ENCODE measurements at regions of chr3 and their contacts with region 1.

Region 1: DNA sequence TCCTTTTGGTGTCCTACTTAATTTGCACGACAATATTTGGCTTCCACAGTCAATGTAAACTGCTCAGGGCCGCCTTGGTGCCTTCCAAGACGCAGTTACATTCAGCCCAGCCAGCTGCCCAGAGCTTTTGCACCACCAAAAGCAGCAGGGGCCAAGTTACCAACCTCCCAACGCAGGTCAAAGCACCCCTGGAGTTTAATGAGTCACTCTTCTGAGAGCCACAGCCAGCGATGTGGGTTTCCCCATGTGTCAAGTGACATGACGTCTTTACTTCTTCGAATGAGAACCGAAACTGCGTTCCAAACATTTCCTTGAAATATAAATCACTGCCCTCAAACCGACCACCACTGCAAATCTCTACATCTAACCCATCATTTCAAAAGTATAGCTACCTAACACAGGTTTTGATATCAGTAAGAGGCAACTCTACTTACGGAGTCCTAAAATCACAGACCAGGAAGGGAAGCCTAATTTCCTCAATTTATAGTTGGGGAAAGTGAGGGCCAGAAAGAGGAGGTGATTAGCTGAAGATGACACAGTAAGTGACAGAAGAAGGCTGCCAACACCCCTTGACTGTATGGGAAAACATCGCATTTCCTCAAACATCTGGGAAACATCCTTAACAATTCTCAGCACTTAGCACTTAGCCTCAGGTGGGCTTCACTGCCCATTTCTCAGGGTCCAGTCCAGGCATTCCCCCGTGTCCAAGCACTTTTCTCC is 24.5 kb downstream of the MB21D2 start:
- DNase-seq: peak; percentile 86
- H3K4me3 Mint-ChIP-seq: peak overlapping the region; percentile 24
- H3K27ac Mint-ChIP-seq: peak overlapping the region; percentile 80
- H3K4me1 Mint-ChIP-seq: peaks cover 82% of the 10 kb centered on the region
- H3K27me3 Mint-ChIP-seq: peaks cover 12% of the 10 kb centered on the region

Region 2: GRCh38 chr3:192675958-192676649 is 217.0 kb before region 1 on chr3:
- CTCF ChIA-PET with region 1: no interaction called
- POLR2A ChIA-PET with region 1: no interaction called
- intact Hi-C with region 1: loop called (anchors 2 kb)
- DNase-seq: peak; percentile 26
- H3K4me3 Mint-ChIP-seq: no peak overlapping the region
- H3K27ac Mint-ChIP-seq: peak overlapping the region; percentile 90
- H3K4me1 Mint-ChIP-seq: peaks cover 9% of the 10 kb centered on the region
- H3K27me3 Mint-ChIP-seq: peaks cover 3% of the 10 kb centered on the region

Region 3: GRCh38 chr3:192831111-192831644 is 62.0 kb before region 1 on chr3:
- CTCF ChIA-PET with region 1: no interaction called
- POLR2A ChIA-PET with region 1: interaction called, 5 read pairs
- intact Hi-C with region 1: loop called (anchors 1 kb)
- DNase-seq: peak; percentile 64
- H3K4me3 Mint-ChIP-seq: no peak overlapping the region
- H3K27ac Mint-ChIP-seq: peak overlapping the region; percentile 24
- H3K4me1 Mint-ChIP-seq: peaks cover 39% of the 10 kb centered on the region
- H3K27me3 Mint-ChIP-seq: peaks cover 1% of the 10 kb centered on the region

Region 4: DNA sequence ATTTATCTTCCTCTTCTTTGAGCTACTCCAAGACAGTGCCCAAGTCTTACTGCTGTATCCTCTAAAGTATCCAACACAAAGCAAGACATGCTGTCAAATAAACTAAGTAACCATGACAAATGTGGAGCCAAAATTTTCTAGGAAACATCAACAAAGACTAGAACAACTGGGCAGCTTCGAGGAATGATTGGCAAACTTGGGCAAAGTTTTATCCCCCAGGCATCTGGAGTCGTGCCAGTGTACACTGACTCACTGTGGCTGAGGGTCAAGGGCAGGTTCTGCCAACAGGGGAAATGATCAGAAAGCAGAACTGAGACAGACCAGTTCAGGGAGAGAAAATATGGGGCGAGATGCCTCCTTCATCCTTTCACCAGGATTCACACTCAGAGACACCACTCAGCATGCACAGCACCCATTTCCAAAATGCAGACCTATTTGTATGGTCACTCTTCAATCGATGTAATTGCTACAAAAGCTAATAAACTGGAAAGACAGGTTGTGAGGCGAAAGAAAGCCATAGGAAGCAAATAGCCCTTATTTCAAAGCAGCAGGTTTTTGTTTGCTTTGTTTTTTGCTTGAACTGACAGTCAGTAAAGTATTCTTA is 41.2 kb before region 1 on chr3:
- CTCF ChIA-PET with region 1: no interaction called
- POLR2A ChIA-PET with region 1: interaction called, 4 read pairs
- intact Hi-C with region 1: loop called (anchors 1 kb)
- DNase-seq: no peak
- H3K4me3 Mint-ChIP-seq: no peak overlapping the region
- H3K27ac Mint-ChIP-seq: no peak overlapping the region
- H3K4me1 Mint-ChIP-seq: peaks cover 57% of the 10 kb centered on the region
- H3K27me3 Mint-ChIP-seq: no peaks in the 10 kb centered on the region

Region 5: GRCh38 chr3:192929755-192930547 is 36.8 kb after region 1 on chr3:
- CTCF ChIA-PET with region 1: no interaction called
- POLR2A ChIA-PET with region 1: no interaction called
- intact Hi-C with region 1: no loop called
- DNase-seq: no peak
- H3K4me3 Mint-ChIP-seq: no peak overlapping the region
- H3K27ac Mint-ChIP-seq: no peak overlapping the region
- H3K4me1 Mint-ChIP-seq: peaks cover under 1% of the 10 kb centered on the region
- H3K27me3 Mint-ChIP-seq: peaks cover 3% of the 10 kb centered on the region

Measured in activated CD4-positive, alpha-beta memory T cell treated with anti-CD3 and anti-CD28 coated beads for 36 hours (primary cell).